Activated naive CD4-positive, alpha-beta T cell treated with anti-CD3 and anti-CD28 coated beads for 36 hours (primary cell): ENCODE measurements at regions of chr7 and their contacts with region 1.

Region 1: DNA sequence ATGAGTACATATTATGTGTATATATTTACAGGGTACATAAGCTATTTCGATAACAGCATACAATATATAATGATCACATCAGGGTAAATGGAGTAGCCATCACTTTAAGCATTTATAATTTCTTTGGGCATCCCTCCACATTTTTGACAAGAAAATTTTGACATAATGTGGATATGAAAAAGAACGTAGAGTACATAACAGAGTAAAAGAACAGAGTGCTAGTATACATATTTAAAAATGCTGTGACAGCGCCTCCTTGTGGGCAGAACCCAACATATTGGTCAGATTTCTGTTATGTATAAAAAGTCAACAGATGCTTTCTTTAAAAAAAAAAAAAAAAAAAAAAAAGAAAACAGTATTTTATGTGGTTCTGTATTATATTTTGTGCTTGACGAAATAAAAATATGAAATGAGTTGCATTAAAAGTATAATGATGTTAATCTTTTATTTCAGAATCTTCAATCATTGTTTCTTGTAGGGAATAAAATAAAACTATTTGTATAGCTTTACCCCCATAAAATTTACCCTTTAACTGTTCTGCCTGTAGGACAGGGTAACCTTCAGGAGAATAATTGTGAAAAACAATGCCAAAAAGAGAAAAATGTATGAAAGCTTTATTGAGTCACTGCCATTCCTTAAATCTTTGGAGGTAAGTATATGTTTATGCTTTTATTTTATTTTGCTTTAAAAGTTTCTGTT is 18.3 kb upstream of the HBP1 start:
- DNase-seq: peak; percentile 91
- H3K4me3 Mint-ChIP-seq: no peak overlapping the region
- H3K27ac Mint-ChIP-seq: no peak overlapping the region
- H3K4me1 Mint-ChIP-seq: peaks cover 4% of the 10 kb centered on the region
- H3K27me3 Mint-ChIP-seq: no peaks in the 10 kb centered on the region

Region 2: GRCh38 chr7:106793015-106793975 is 357.2 kb before region 1 on chr7:
- CTCF ChIA-PET with region 1: interaction called, 71 read pairs
- intact Hi-C with region 1: loop called (anchors 1 kb)
- DNase-seq: peak; percentile 54
- H3K4me3 Mint-ChIP-seq: no peak overlapping the region
- H3K27ac Mint-ChIP-seq: no peak overlapping the region
- H3K4me1 Mint-ChIP-seq: no peaks in the 10 kb centered on the region
- H3K27me3 Mint-ChIP-seq: no peaks in the 10 kb centered on the region

Region 3: DNA sequence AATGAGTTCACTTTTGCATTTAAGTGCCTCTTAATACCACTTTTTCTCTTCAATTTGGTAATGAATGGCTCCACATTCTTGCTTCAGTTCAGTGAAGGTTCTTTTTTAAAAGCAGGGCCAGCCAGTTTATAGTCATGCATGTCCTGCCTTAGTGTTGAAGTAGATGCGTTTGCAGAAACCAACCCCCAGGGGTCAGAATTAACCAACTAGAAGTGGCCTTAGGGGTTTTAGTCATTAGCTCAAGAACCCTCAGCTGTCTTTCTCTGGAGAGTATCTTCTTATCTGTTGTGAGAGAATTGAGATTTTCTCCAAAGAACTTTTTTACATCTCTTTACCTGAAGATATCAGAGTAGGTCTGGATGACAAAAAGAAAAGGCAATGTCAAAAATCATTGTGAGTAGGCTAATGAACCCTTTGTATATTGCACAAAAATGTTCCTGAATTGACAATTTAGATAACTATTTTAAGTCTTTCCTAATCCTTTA is 203.2 kb before region 1 on chr7:
- CTCF ChIA-PET with region 1: interaction called, 69 read pairs
- intact Hi-C with region 1: loop called (anchors 1 kb)
- DNase-seq: peak; percentile 48
- H3K4me3 Mint-ChIP-seq: no peak overlapping the region
- H3K27ac Mint-ChIP-seq: no peak overlapping the region
- H3K4me1 Mint-ChIP-seq: no peaks in the 10 kb centered on the region
- H3K27me3 Mint-ChIP-seq: peaks cover 1% of the 10 kb centered on the region

Region 4: GRCh38 chr7:107078517-107078966 is 72.0 kb before region 1 on chr7:
- CTCF ChIA-PET with region 1: interaction called, 10 read pairs
- intact Hi-C with region 1: no loop called
- DNase-seq: no peak
- H3K4me3 Mint-ChIP-seq: no peak overlapping the region
- H3K27ac Mint-ChIP-seq: no peak overlapping the region
- H3K4me1 Mint-ChIP-seq: no peaks in the 10 kb centered on the region
- H3K27me3 Mint-ChIP-seq: no peaks in the 10 kb centered on the region

Region 5: DNA sequence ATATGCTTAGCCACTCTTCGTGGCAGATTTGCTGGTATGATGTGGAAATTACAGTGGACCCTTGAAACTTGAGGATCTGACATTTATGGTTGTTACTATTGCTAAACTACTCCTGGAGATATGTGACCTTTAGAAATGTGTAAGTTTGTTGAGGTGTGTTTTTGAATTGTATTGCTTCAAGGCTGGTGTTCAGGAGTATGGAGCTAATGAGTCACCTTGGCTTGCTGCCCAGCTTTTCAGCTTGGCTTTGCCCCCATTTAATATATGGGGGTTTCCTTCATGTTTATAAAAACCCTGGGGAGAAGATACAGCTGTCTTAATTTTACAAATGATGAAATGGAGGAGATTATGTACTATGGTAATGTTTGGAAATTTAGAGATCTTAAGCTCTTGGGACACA is 29.9 kb after region 1 on chr7:
- CTCF ChIA-PET with region 1: interaction called, 10 read pairs
- intact Hi-C with region 1: no loop called
- DNase-seq: peak; percentile 91
- H3K4me3 Mint-ChIP-seq: peak overlapping the region; percentile 30
- H3K27ac Mint-ChIP-seq: peak overlapping the region; percentile 78
- H3K4me1 Mint-ChIP-seq: peaks cover 52% of the 10 kb centered on the region
- H3K27me3 Mint-ChIP-seq: no peaks in the 10 kb centered on the region

Region 6: DNA sequence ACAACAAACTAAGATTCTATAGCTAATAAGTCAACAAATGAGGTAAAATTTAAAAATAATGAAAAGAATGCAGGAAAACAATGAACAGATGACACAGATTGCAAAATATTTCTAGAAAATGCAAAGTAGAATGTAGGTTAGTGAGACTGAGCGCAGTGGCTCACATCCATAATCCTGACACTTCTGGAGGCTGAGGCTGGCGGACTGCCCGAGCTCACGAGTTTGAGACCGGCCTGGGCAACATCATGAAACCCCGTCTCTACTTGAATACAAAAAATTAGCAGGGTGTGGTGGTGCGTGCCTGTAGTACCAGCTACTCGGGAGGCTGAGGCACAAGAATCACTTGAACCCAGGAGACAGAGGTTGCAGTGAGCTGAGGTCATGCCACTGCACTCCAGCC is 273.3 kb after region 1 on chr7:
- CTCF ChIA-PET with region 1: no interaction called
- intact Hi-C with region 1: no loop called
- DNase-seq: no peak
- H3K4me3 Mint-ChIP-seq: no peak overlapping the region
- H3K27ac Mint-ChIP-seq: no peak overlapping the region
- H3K4me1 Mint-ChIP-seq: no peaks in the 10 kb centered on the region
- H3K27me3 Mint-ChIP-seq: no peaks in the 10 kb centered on the region

Region 7: GRCh38 chr7:107501593-107501992 is 351.1 kb after region 1 on chr7:
- CTCF ChIA-PET with region 1: interaction called, 3 read pairs
- intact Hi-C with region 1: loop called (anchors 2 kb)
- DNase-seq: peak; percentile 48
- H3K4me3 Mint-ChIP-seq: no peak overlapping the region
- H3K27ac Mint-ChIP-seq: no peak overlapping the region
- H3K4me1 Mint-ChIP-seq: peaks cover 16% of the 10 kb centered on the region
- H3K27me3 Mint-ChIP-seq: no peaks in the 10 kb centered on the region